Activated naive CD4-positive, alpha-beta T cell treated with anti-CD3 and anti-CD28 coated beads for 36 hours (primary cell): ENCODE measurements at regions of chr2 and their contacts with region 1.

Region 1: GRCh38 chr2:32277674-32278482 is at the start of gene YIPF4:
- DNase-seq: peak; percentile 91
- H3K4me3 Mint-ChIP-seq: peak within 1 kb of the TSS; percentile 84
- H3K27ac Mint-ChIP-seq: peak within 1 kb of the TSS; percentile 93
- H3K4me1 Mint-ChIP-seq: peaks cover 22% of the 10 kb centered on the region
- H3K27me3 Mint-ChIP-seq: no peaks in the 10 kb centered on the region
- total RNA-seq, gene YIPF4: 36.5 to 39.7 TPM

Region 2: GRCh38 chr2:32289165-32289999 is 11.5 kb after region 1 on chr2:
- CTCF ChIA-PET with region 1: no interaction called
- intact Hi-C with region 1: loop called (anchors 1 kb)
- DNase-seq: no peak
- H3K4me3 Mint-ChIP-seq: no peak overlapping the region
- H3K27ac Mint-ChIP-seq: peak overlapping the region; percentile 32
- H3K4me1 Mint-ChIP-seq: peaks cover 33% of the 10 kb centered on the region
- H3K27me3 Mint-ChIP-seq: no peaks in the 10 kb centered on the region

Region 3: DNA sequence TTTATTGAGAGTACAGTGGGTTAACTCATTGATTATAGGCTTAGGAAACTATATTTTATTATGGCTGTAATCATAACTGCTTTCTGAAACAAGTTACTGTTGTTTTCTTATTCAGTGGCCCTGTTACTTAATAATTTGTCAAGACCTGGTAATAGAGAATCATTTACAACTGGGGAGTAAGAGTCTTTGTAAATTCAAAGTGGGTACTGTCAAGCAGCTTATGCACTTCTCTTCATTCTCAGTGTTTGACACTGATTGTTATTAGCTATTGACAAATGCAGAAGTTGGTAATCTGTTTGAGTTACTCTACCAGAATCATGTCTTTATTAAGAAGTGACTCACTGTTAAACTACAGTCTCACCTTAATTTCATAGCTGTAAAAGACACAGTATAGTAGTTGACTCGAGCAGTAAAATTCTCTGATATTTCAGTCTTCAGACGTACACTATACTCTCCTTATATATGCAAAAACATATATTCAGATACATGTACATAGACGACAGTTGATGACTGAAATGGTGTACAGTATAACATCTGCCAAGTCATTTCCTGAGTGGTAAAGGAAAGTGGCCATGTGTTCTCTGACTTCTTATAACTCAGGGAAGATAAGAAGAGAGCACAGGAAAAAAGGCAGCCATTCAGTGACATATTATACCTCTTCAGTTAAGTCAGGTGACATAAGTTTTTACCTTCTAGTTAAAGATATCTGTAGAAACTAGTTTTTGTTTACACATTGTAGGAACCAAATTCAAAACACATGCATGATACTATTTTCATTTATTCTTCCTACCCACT is 314.0 kb after region 1 on chr2:
- CTCF ChIA-PET with region 1: no interaction called
- intact Hi-C with region 1: loop called (anchors 10 kb)
- DNase-seq: peak; percentile 20
- H3K4me3 Mint-ChIP-seq: peak overlapping the region; percentile 39
- H3K27ac Mint-ChIP-seq: peak overlapping the region; percentile 90
- H3K4me1 Mint-ChIP-seq: peaks cover 36% of the 10 kb centered on the region
- H3K27me3 Mint-ChIP-seq: no peaks in the 10 kb centered on the region